Ovary (tissue), 10 donors: ENCODE measurements at regions of chr12 and their contacts with region 1.

Region 1: GRCh38 chr12:131311764-131312163 is 358.1 kb downstream of the ADGRD1 start:
- DNase-seq: no peak
- H3K4me3 ChIP-seq: no peak overlapping the region
- H3K27ac ChIP-seq: no peak overlapping the region
- H3K4me1 ChIP-seq: no peaks in the 10 kb centered on the region
- H3K27me3 ChIP-seq: no peaks in the 10 kb centered on the region
- CTCF ChIP-seq: no peak
- EP300 ChIP-seq: no peak
- POLR2A ChIP-seq: no peak

Region 2: GRCh38 chr12:131642101-131642540 is 330.4 kb after region 1 on chr12:
- intact Hi-C with region 1: loop called in 2 of 4 experiments (anchors 5 kb)
- DNase-seq: no peak
- H3K4me3 ChIP-seq: no peak overlapping the region
- H3K27ac ChIP-seq: no peak overlapping the region
- H3K4me1 ChIP-seq: peaks cover 1% of the 10 kb centered on the region
- H3K27me3 ChIP-seq: no peaks in the 10 kb centered on the region
- CTCF ChIP-seq: no peak
- EP300 ChIP-seq: no peak
- POLR2A ChIP-seq: no peak